Activated T-helper 1 cell treated with anti-CD3 and anti-CD28 coated beads, Interleukin-12 subunit alpha, Interleukin-12 subunit beta, Interleukin-2, Interleukin-4 antibody, amounts not matched to agents 30 ng/mL and 10 ng/mL and 1 ng/mL, durations not matched to agents 14 hours and 24 hours and 36 hours (primary cell): ENCODE measurements at regions of chr22 and their contacts with region 1.

Region 1: GRCh38 chr22:36065775-36066559 is 37.3 kb upstream of the RBFOX2 start:
- DNase-seq: peak; percentile 49
- H3K4me3 Mint-ChIP-seq: peak overlapping the region; percentile 84
- H3K27ac Mint-ChIP-seq: peak overlapping the region; percentile 83
- H3K4me1 Mint-ChIP-seq: peaks cover 11% of the 10 kb centered on the region
- H3K27me3 Mint-ChIP-seq: peaks cover 21% of the 10 kb centered on the region

Region 2: GRCh38 chr22:35589071-35589952 is 476.7 kb before region 1 on chr22:
- intact Hi-C with region 1: no loop called
- DNase-seq: no peak
- H3K4me3 Mint-ChIP-seq: no peak overlapping the region
- H3K27ac Mint-ChIP-seq: peak overlapping the region; percentile 13
- H3K4me1 Mint-ChIP-seq: no peaks in the 10 kb centered on the region
- H3K27me3 Mint-ChIP-seq: peaks cover 2% of the 10 kb centered on the region

Region 3: DNA sequence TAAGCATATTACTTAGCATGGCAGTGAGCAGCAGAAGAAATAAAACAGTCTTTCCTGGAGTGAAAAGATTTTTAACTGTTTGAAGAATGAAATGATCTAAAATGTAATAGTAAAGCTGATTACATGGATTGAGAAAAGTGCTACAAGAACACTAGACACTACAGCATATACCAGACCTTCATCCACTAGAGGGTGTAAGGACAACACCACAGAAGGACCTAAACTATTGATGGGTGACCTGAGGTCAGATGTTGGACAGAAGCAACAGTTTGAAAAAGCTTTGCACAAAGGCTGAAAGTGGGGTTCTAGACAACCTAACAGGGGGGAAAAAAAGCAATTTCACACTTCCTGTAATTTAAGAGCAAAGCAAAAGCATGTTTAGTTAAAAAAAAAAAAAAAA is 135.0 kb before region 1 on chr22:
- intact Hi-C with region 1: loop called (anchors 5 kb)
- DNase-seq: no peak
- H3K4me3 Mint-ChIP-seq: no peak overlapping the region
- H3K27ac Mint-ChIP-seq: no peak overlapping the region
- H3K4me1 Mint-ChIP-seq: no peaks in the 10 kb centered on the region
- H3K27me3 Mint-ChIP-seq: peaks cover 8% of the 10 kb centered on the region

Region 4: DNA sequence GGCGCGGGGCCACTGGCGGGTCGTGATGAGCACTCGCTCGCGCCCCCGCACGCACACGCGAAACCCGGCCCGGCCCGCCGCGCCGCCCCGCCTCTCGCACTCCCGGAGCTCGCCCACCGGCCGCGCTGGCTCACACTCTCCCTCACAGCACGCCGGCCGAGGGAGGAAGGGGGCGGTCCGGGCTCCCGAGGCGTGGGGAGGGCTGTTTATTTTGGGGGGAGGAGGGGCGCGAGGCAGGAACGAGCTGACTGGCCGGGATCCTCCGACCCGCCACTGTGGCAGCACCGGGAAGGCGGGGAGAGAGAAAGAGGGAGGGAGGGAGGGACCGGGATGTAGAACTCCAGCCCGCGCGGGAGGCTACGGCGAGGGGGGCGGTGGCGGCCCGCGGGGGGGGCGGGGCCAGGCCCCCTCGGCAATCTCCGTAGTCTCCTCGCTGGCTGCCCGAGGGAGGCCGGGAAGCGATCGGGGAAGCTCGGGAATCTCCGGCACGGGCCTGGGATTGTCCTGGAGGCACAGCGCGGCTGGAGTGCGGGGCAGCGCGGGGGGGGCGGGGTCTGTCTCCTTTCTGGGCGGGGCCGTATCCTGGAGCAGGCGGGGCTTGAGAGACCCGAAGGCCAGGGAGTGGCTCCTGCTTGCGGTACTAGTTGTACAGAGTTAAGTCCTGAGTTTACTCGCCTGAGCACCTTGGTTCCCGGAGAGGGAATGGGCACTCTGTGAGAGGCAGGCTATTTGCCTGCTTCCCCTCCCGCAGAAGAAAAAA is 37.1 kb before region 1 on chr22 and contains the start of gene RBFOX2:
- intact Hi-C with region 1: loop called (anchors 1 kb)
- DNase-seq: peak; percentile 54
- H3K4me3 Mint-ChIP-seq: peak within 1 kb of the TSS; percentile 87
- H3K27ac Mint-ChIP-seq: peak within 1 kb of the TSS; percentile 67
- H3K4me1 Mint-ChIP-seq: peaks cover 21% of the 10 kb centered on the region
- H3K27me3 Mint-ChIP-seq: peaks cover 47% of the 10 kb centered on the region
- total RNA-seq, gene RBFOX2: 3.7 and 3.8 TPM in 2 replicates

Region 5: GRCh38 chr22:36123673-36124630 is 58.0 kb after region 1 on chr22:
- intact Hi-C with region 1: loop called (anchors 1 kb)
- DNase-seq: peak; percentile 89
- H3K4me3 Mint-ChIP-seq: peak overlapping the region; percentile 54
- H3K27ac Mint-ChIP-seq: peak overlapping the region; percentile 83
- H3K4me1 Mint-ChIP-seq: peaks cover 10% of the 10 kb centered on the region
- H3K27me3 Mint-ChIP-seq: peaks cover 4% of the 10 kb centered on the region

Region 6: GRCh38 chr22:36180038-36180880 is 114.3 kb after region 1 on chr22:
- intact Hi-C with region 1: loop called (anchors 2 kb)
- DNase-seq: peak; percentile 62
- H3K4me3 Mint-ChIP-seq: no peak overlapping the region
- H3K27ac Mint-ChIP-seq: no peak overlapping the region
- H3K4me1 Mint-ChIP-seq: peaks cover 5% of the 10 kb centered on the region
- H3K27me3 Mint-ChIP-seq: no peaks in the 10 kb centered on the region